Heart left ventricle (tissue), 16 donors: ENCODE measurements at regions of chr1 and their contacts with region 1.

Region 1: GRCh38 chr1:152110860-152111514 is 4.3 kb downstream of the TCHH start:
- DNase-seq: peak in 3 of 5 donors; percentile 7 to 68 (median 32)
- ATAC-seq: peak in 3 of 4 donors; percentile 34 to 57 (median 35)
- H3K4me3 ChIP-seq: peak overlapping the region; percentile 18 to 59 (median 46)
- H3K27ac ChIP-seq: no peak overlapping the region
- H3K4me1 ChIP-seq: peaks cover 5 to 49% (median 29%) of the 10 kb centered on the region in 12 donors
- H3K27me3 ChIP-seq: peaks cover 44 to 100% (median 80%) of the 10 kb centered on the region in 9 donors
- CTCF ChIP-seq: no peak
- POLR2A ChIP-seq: no peak

Region 2: GRCh38 chr1:151828965-151829698 is 281.9 kb before region 1 on chr1:
- intact Hi-C with region 1: no loop called
- DNase-seq: peak; percentile 54 to 65 (median 59)
- ATAC-seq: peak in 2 of 4 donors; percentile 18 to 27
- H3K4me3 ChIP-seq: no peak overlapping the region
- H3K27ac ChIP-seq: peak overlapping the region in 1 of 12 donors; percentile 27
- H3K4me1 ChIP-seq: peaks cover 0 to 48% (median 17%) of the 10 kb centered on the region in 12 donors
- H3K27me3 ChIP-seq: no peaks in the 10 kb centered on the region
- CTCF ChIP-seq: no peak
- POLR2A ChIP-seq: no peak

Region 3: GRCh38 chr1:152067150-152067549 is 43.8 kb before region 1 on chr1:
- intact Hi-C with region 1: loop called in 1 of 10 experiments (anchors 5 kb)
- DNase-seq: no peak
- ATAC-seq: no peak
- H3K4me3 ChIP-seq: no peak overlapping the region
- H3K27ac ChIP-seq: no peak overlapping the region
- H3K4me1 ChIP-seq: no peaks in the 10 kb centered on the region
- H3K27me3 ChIP-seq: peaks cover 0 to 33% (median 4%) of the 10 kb centered on the region in 9 donors
- CTCF ChIP-seq: no peak
- POLR2A ChIP-seq: no peak